Pancreas (tissue), 10 donors: ENCODE measurements at regions of chr16 and their contacts with region 1.

Region 1: DNA sequence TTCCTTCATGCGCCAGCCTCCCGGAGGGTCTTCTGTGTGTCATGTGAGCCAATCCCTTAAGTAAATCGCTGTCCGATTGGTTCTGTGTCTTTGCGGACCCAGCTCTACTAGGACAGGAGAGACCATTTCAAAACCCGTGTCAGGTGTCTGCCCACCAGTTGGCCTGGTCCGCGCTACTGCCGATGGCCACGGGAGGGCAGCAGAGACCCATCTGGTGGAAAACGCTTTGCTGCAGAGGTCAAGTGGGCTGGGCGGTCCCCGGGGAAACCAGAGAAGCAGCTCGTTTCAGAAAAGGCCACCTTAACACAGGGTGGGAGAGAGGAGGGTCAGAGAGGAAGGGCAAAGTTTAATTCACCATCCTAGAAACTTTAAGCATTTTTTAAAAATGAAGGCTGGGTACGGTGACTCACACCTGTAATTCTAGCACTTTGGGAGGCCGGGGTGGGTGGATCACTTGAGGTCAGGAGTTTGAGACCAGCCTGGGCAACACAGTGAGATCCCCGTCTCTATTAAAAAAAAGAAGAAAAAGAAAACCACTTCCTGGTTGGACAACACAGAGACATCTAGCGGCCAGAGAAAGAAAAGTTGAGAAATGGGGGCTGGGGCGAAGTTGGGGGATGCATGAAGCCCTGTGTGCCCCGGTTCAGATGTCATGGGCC is 2.8 kb upstream of the CIBAR2 start:
- DNase-seq: peak; percentile 80 to 99 (median 90)
- ATAC-seq: peak; percentile 92 to 98 (median 96)
- H3K4me3 ChIP-seq: peak overlapping the region in 2 of 4 donors; percentile 2 to 4
- H3K27ac ChIP-seq: peak overlapping the region in 2 of 4 donors; percentile 52 to 61
- H3K4me1 ChIP-seq: no peaks in the 10 kb centered on the region
- H3K27me3 ChIP-seq: no peaks in the 10 kb centered on the region
- CTCF ChIP-seq: peak; percentile 86 to 98 (median 92)

Region 2: GRCh38 chr16:85220125-85220839 is 105.2 kb after region 1 on chr16:
- intact Hi-C with region 1: loop called in 1 of 3 experiments (anchors 10 kb)
- DNase-seq: peak; percentile 83 to 95 (median 88)
- ATAC-seq: peak; percentile 81 to 92 (median 89)
- H3K4me3 ChIP-seq: peak overlapping the region in 2 of 4 donors; percentile 28 to 40
- H3K27ac ChIP-seq: peak overlapping the region; percentile 47 to 85 (median 66)
- H3K4me1 ChIP-seq: peaks cover 6 to 9% (median 8%) of the 10 kb centered on the region in 3 donors
- H3K27me3 ChIP-seq: no peaks in the 10 kb centered on the region
- CTCF ChIP-seq: no peak

Region 3: DNA sequence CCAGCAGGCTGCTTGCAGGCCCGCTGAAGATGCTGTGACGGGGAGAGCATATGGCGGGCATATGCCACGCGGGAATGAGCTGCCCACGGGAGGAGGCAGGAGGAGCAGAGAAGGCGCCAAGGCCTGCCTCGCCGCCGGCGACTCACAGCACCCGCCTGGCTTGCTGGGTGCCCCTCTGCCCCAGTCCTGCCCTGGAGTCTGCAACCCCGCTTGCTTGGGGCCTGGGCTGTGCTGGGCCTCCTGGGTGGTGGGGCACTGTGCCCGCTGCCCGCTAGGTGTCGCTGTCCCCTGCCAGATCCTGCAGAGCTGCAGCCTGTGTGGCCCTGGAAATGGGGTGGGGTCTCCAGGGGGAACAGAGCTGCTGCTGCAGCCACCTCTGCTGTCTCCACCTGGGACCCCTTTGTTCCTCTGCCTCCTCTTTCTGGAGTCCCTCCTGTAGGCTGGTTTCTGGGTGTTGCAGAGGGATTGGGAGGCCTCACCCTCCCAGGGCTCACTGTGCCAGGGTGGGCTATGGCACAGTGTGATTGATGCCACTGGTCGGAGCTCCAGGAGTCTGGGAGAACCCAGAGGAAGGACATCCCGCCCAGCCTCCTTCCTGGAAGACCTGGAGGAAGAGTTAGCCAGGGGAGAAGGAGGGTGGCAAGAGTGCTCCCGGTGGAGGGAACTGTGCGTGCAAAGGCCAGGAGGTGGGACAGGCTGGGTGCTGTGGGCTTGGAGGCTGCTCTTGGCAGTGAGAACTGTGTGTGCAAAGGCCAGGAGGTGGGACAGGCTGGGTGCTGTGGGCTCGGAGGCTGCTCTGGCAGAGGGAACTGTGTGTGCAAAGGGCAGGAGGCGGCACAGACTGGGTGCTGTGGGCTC is 138.3 kb after region 1 on chr16:
- intact Hi-C with region 1: loop called in 1 of 3 experiments (anchors 10 kb)
- DNase-seq: peak; percentile 51 to 90 (median 74)
- ATAC-seq: peak; percentile 58 to 83 (median 77)
- H3K4me3 ChIP-seq: no peak overlapping the region
- H3K27ac ChIP-seq: no peak overlapping the region
- H3K4me1 ChIP-seq: peaks cover 0 to 3% (median 0%) of the 10 kb centered on the region in 3 donors
- H3K27me3 ChIP-seq: no peaks in the 10 kb centered on the region
- CTCF ChIP-seq: peak; percentile 86 to 97 (median 91)